ENCODE measurements at regions of chr20 and their contacts with region 1.

Region 1: GRCh38 chr20:36861875-36862801 is 13.8 kb upstream of the TLDC2 start:
- DNase-seq: peak; percentile 98
- H3K4me3 Mint-ChIP-seq: peak overlapping the region; percentile 76
- H3K27ac Mint-ChIP-seq: no peak overlapping the region
- H3K4me1 Mint-ChIP-seq: peaks cover 44% of the 10 kb centered on the region
- H3K27me3 Mint-ChIP-seq: no peaks in the 10 kb centered on the region
- CTCF ChIP-seq: no peak

Region 2: DNA sequence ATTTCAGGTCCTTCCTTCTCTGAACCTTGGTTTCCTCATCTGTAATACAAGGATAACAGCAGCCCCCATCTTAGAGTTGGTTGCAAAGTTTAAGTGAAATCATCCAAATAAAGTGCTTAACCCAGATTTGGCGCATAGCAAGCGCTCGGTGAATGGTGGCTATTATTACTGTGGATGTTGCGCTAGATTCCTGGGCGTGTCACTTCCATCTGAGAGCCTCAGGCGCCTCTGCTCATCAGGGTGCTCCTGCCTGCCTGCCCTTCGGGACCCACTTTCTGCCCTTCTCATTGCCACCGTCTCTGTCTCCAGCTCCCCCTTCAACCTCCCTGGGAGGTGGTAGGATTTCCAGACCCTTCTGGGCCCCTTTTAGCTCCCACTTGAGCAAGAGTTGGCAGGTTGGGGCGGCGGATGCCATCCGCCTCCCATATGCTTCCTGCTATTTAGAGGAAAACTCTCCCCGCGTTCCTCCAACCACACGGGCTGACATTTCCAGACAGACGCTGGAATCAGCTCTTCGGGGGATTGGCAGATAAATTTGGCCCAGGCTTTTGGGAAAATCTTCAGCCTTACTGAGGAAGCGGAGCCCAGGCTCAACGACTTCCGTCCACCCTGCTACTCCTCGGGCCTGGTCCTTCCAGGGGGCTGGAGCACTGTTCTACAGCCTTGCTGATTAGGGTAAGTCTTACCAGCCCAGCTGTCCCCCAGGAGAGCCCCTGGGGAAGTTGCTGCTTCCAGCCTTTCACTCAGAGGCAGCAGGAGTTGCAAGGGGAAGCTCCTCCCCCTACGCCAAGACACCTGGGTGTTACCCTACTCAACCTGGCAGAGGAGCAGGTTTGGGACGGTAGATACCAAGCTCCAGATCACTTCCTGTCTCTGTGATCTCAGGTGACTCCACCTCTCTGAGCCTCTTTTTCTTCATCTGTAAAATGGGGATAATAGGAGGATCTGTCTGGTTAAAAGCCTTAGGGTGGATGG is 484.5 kb before region 1 on chr20:
- CTCF ChIA-PET with region 1: no interaction called
- POLR2A ChIA-PET with region 1: no interaction called
- intact Hi-C with region 1: no loop called
- DNase-seq: no peak
- H3K4me3 Mint-ChIP-seq: no peak overlapping the region
- H3K27ac Mint-ChIP-seq: no peak overlapping the region
- H3K4me1 Mint-ChIP-seq: no peaks in the 10 kb centered on the region
- H3K27me3 Mint-ChIP-seq: peaks cover 86% of the 10 kb centered on the region
- CTCF ChIP-seq: no peak

Region 3: GRCh38 chr20:36773597-36774390 is 88.3 kb before region 1 on chr20 and contains the start of gene DSN1:
- CTCF ChIA-PET with region 1: interaction called, 9 read pairs
- POLR2A ChIA-PET with region 1: interaction called, 35 read pairs
- intact Hi-C with region 1: no loop called
- DNase-seq: peak; percentile 96
- H3K4me3 Mint-ChIP-seq: peak within 1 kb of the TSS; percentile 79
- H3K27ac Mint-ChIP-seq: peak within 1 kb of the TSS; percentile 90
- H3K4me1 Mint-ChIP-seq: peaks cover 8% of the 10 kb centered on the region
- H3K27me3 Mint-ChIP-seq: no peaks in the 10 kb centered on the region
- CTCF ChIP-seq: no peak
- total RNA-seq, gene DSN1: 7.8 and 8.4 TPM in 2 replicates

Region 4: DNA sequence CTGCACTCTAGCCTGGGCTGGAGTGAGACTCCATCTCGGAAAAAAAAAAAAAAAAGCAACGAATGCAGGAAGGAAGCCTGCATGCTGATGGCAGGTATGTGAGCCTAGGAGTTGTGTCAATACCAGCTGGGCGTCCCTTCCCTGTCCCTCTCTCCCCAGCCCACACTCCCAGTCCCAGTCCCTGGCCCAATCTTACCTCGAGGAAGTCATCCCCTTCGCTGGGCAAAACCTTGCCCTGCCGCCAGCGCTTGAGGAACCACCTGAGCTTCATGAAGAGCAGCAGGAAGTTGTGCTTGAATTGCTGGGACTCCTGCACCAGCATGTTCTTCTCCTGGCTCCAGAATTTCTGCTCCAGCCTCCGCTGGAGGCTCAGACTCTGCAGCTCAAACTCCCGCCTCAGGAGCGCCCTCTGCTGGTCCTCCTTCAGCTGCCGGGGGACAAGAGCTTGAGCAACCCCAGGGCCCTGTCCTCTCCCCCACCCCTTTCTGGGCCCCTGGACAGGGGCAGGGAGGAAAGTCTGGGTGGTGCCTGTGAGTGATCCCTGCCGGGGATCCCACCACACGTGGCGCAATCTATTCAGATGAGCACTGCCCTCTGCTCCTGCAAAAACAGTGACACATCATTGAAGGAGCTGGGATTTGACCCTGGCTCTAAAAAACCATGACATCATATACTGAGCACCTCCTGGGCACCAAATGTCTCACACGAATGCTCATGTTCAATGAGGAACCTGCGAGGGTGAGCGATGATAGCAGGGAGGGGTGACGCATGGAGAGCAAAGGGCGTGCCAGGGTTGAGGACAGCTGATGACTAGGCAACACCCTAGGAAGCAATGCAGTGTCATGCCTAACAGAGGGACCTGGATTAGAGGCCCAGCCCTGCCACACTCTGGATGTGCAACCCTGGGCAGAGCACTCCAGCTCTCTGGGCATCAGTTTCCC is 53.6 kb before region 1 on chr20:
- CTCF ChIA-PET with region 1: interaction called, 10 read pairs
- POLR2A ChIA-PET with region 1: interaction called, 7 read pairs
- intact Hi-C with region 1: loop called (anchors 1 kb)
- DNase-seq: peak; percentile 77
- H3K4me3 Mint-ChIP-seq: no peak overlapping the region
- H3K27ac Mint-ChIP-seq: peak overlapping the region; percentile 89
- H3K4me1 Mint-ChIP-seq: peaks cover 11% of the 10 kb centered on the region
- H3K27me3 Mint-ChIP-seq: no peaks in the 10 kb centered on the region
- CTCF ChIP-seq: peak; percentile 93

Region 5: GRCh38 chr20:36847009-36847709 is 15.0 kb before region 1 on chr20:
- CTCF ChIA-PET with region 1: interaction called, 4 read pairs
- POLR2A ChIA-PET with region 1: interaction called, 88 read pairs
- intact Hi-C with region 1: no loop called
- DNase-seq: peak; percentile 86
- H3K4me3 Mint-ChIP-seq: peak overlapping the region; percentile 55
- H3K27ac Mint-ChIP-seq: peak overlapping the region; percentile 91
- H3K4me1 Mint-ChIP-seq: peaks cover 8% of the 10 kb centered on the region
- H3K27me3 Mint-ChIP-seq: no peaks in the 10 kb centered on the region
- CTCF ChIP-seq: no peak

Region 6: GRCh38 chr20:36886859-36887751 is 25.0 kb after region 1 on chr20:
- CTCF ChIA-PET with region 1: interaction called, 14 read pairs
- POLR2A ChIA-PET with region 1: interaction called, 6 read pairs
- intact Hi-C with region 1: loop called (anchors 1 kb)
- DNase-seq: peak; percentile 82
- H3K4me3 Mint-ChIP-seq: no peak overlapping the region
- H3K27ac Mint-ChIP-seq: no peak overlapping the region
- H3K4me1 Mint-ChIP-seq: peaks cover 7% of the 10 kb centered on the region
- H3K27me3 Mint-ChIP-seq: no peaks in the 10 kb centered on the region
- CTCF ChIP-seq: peak; percentile 98